ENCODE measurements at regions of chr19 and their contacts with region 1.

Region 1: DNA sequence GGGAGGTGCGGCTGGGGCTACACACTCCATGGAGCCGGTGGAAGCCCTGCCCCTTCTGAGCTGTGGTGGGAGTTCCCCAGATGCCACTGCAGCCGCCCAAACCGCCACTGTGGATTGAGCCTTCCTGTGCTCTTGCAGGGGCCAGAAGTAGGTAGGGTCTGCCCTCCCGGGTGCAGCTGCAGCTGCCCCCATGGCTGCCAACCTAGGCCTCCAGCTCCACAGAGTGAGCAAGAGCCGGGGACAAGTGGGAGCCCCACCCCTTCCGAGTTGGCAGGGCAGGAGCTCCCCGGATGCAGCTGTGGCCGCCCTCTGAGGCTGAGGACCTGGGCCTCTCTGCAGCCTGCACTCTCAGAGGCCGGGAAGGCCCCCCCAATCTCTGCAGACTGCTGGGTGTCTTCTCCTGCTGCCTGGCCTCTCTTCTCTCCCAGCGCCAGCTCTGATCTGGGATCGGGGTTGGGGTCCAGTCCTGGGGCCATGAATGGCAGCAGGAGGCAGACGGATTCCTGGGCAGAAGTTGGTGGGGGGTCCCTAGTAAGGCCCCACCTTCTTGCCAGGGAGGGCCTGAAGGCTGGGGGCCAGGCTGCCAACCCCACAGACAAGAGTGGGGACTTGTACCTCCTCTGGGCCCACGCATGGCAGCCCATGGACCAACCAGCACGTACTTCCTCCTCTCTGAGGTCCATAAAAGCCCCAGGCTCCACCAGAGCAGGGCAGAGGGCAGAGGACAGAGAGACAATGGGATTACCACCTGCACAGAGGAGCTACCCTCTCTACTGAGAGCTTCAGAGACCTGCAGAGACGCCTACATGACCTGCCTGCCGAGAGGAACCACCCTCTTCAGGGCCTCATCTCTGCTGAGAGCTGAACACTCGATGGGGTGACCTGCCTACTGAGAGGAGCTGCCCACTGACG is 28.9 kb downstream of the AP2S1 start:
- DNase-seq: peak; percentile 85
- ATAC-seq: peak; percentile 66
- H3K4me3 ChIP-seq: peak overlapping the region in 3 of 5 experiments; percentile 23 to 51 (median 29)
- H3K4me3 Mint-ChIP-seq: peak overlapping the region; percentile 69
- H3K27ac ChIP-seq: peak overlapping the region; percentile 79
- H3K27ac Mint-ChIP-seq: peak overlapping the region; percentile 92
- H3K4me1 ChIP-seq: peaks cover 60 to 73% of the 10 kb centered on the region in 2 donors
- H3K4me1 Mint-ChIP-seq: peaks cover 52% of the 10 kb centered on the region
- H3K27me3 ChIP-seq: no peaks in the 10 kb centered on the region
- H3K27me3 Mint-ChIP-seq: no peaks in the 10 kb centered on the region
- CTCF ChIP-seq: no peak

Region 2: DNA sequence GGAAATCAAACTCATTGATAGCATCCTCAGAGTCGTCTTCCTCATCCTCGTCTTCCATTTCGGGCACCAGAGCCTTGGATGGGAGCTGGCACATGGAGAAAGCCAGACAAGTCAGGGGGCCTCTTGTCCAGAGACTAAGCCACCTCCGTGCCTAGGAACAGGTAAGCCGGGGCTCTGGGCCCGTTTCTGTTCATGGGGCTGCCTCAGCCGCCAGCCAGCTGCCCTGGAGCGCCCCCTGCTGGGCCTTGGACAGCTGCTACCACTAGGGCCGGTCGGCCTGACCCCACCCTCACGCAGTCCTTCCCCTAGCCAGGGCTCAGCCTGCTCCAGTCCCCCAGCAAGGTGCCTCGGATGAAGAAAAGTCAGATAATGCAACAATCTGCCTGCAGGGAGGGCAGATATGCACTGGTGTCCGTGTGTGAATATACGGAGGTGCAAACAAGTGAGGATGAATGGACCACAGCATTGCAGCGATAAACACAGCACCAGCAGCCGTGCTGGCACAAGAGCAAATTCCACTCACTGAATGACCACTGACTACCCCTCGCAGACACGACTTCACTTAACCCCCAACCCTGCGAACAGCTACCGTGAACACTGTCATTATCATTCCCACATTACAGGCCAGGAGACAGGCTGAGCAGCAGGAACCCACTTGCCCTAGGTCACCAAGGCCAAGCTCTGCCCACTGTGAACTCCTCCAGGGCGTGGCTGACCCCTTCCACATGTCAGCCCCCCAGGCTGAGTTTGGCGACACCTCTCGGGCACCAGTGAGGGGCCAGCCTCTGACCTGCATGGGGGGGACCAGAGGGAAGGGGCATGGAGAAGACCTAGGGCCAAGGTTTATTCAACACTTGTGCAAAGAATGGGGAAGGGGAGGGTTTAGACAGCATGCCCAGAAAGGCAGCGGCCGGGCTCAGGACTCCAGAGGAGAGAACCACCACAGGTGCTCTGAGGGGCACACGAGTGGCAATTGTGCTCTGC is 92.8 kb before region 1 on chr19:
- CTCF ChIA-PET with region 1: no interaction called
- POLR2A ChIA-PET with region 1: interaction called, 11 read pairs
- intact Hi-C with region 1: no loop called
- DNase-seq: peak; percentile 87
- ATAC-seq: peak; percentile 89
- H3K4me3 ChIP-seq: no peak overlapping the region
- H3K4me3 Mint-ChIP-seq: no peak overlapping the region
- H3K27ac ChIP-seq: no peak overlapping the region
- H3K27ac Mint-ChIP-seq: peak overlapping the region; percentile 80
- H3K4me1 ChIP-seq: peaks cover 10% of the 10 kb centered on the region in 2 donors
- H3K4me1 Mint-ChIP-seq: peaks cover 30% of the 10 kb centered on the region
- H3K27me3 ChIP-seq: no peaks in the 10 kb centered on the region
- H3K27me3 Mint-ChIP-seq: no peaks in the 10 kb centered on the region
- CTCF ChIP-seq: peak; percentile 92

Region 3: DNA sequence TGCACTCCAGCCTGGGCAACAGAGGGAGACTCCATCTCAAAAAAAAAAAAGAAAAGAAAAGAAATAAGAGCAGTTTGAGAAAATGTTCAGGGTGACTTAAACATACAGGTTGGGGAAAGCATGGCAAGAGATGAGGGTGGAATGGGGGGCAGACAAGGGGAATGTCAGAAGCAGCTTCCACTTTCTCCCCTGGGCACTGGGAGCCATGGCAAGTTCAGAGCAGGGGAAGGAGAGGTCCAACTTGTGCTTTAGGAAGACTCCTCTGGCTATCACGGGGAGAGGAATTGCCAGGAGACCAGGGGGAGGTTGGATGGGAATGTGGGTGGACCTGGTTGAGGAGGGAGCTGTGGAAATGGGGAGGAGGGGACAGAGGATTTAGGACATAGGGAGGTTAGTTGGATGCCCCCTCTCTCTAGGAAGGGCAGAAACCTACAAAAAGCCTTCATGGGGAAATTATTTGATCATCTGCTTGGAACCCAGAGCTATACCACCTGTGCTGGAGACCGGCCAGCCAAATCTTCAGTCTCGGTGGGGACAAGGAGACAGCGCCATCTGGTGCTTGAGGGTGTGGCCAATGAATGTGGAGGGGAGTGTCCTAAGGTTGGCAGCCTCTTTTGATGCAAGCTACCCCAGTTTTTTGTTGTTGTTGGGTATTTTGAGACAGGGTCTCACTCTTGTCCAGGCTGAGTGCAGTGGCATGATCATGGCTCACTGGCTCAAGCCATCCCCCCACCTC is 68.2 kb before region 1 on chr19:
- CTCF ChIA-PET with region 1: interaction called, 26 read pairs
- POLR2A ChIA-PET with region 1: interaction called, 5 read pairs
- intact Hi-C with region 1: loop called (anchors 2 kb)
- DNase-seq: peak; percentile 78
- ATAC-seq: peak; percentile 82
- H3K4me3 ChIP-seq: no peak overlapping the region
- H3K4me3 Mint-ChIP-seq: no peak overlapping the region
- H3K27ac ChIP-seq: no peak overlapping the region
- H3K27ac Mint-ChIP-seq: peak overlapping the region; percentile 32
- H3K4me1 ChIP-seq: peaks cover 0 to 7% of the 10 kb centered on the region in 2 donors
- H3K4me1 Mint-ChIP-seq: peaks cover 18% of the 10 kb centered on the region
- H3K27me3 ChIP-seq: no peaks in the 10 kb centered on the region
- H3K27me3 Mint-ChIP-seq: no peaks in the 10 kb centered on the region
- CTCF ChIP-seq: peak; percentile 65

Region 4: GRCh38 chr19:46766569-46767317 is 55.0 kb before region 1 on chr19:
- CTCF ChIA-PET with region 1: interaction called, 11 read pairs
- POLR2A ChIA-PET with region 1: interaction called, 12 read pairs
- intact Hi-C with region 1: no loop called
- DNase-seq: peak; percentile 67
- ATAC-seq: peak; percentile 64
- H3K4me3 ChIP-seq: no peak overlapping the region
- H3K4me3 Mint-ChIP-seq: no peak overlapping the region
- H3K27ac ChIP-seq: no peak overlapping the region
- H3K27ac Mint-ChIP-seq: no peak overlapping the region
- H3K4me1 ChIP-seq: no peaks in the 10 kb centered on the region
- H3K4me1 Mint-ChIP-seq: peaks cover 2% of the 10 kb centered on the region
- H3K27me3 ChIP-seq: no peaks in the 10 kb centered on the region
- H3K27me3 Mint-ChIP-seq: no peaks in the 10 kb centered on the region
- CTCF ChIP-seq: peak; percentile 72

Region 5: GRCh38 chr19:46860125-46860845 is 38.5 kb after region 1 on chr19:
- CTCF ChIA-PET with region 1: interaction called, 4 read pairs
- POLR2A ChIA-PET with region 1: interaction called, 4 read pairs
- intact Hi-C with region 1: loop called (anchors 1 kb)
- DNase-seq: peak; percentile 97
- ATAC-seq: peak; percentile 81
- H3K4me3 ChIP-seq: peak overlapping the region in 4 of 5 experiments; percentile 68 to 79 (median 77)
- H3K4me3 Mint-ChIP-seq: peak overlapping the region; percentile 91
- H3K27ac ChIP-seq: peak overlapping the region; percentile 71 to 77
- H3K27ac Mint-ChIP-seq: peak overlapping the region; percentile 95
- H3K4me1 ChIP-seq: peaks cover 40 to 41% of the 10 kb centered on the region in 2 donors
- H3K4me1 Mint-ChIP-seq: peaks cover 22% of the 10 kb centered on the region
- H3K27me3 ChIP-seq: no peaks in the 10 kb centered on the region
- H3K27me3 Mint-ChIP-seq: no peaks in the 10 kb centered on the region
- CTCF ChIP-seq: no peak

Measured in B cell (primary cell).